ENCODE measurements at regions of chr17 and their contacts with region 1.

Region 1: GRCh38 chr17:6640536-6641373 is at the starts of genes KIAA0753 and TXNDC17:
- DNase-seq: peak; percentile 95
- ATAC-seq: peak; percentile 95
- H3K4me3 ChIP-seq: peak within 1 kb of the TSS; percentile 83 to 94 (median 89)
- H3K4me3 Mint-ChIP-seq: peak within 1 kb of the TSS; percentile 98
- H3K27ac ChIP-seq: peak within 1 kb of the TSS; percentile 64 to 89
- H3K27ac Mint-ChIP-seq: peak within 1 kb of the TSS; percentile 99
- H3K4me1 ChIP-seq: peaks cover 22 to 30% of the 10 kb centered on the region in 2 donors
- H3K4me1 Mint-ChIP-seq: peaks cover 37% of the 10 kb centered on the region
- H3K27me3 ChIP-seq: no peaks in the 10 kb centered on the region
- H3K27me3 Mint-ChIP-seq: no peaks in the 10 kb centered on the region
- CTCF ChIP-seq: no peak
- total RNA-seq, gene KIAA0753: 28.7 and 29.1 TPM in 2 replicates
- total RNA-seq, gene TXNDC17: 18.2 and 19.5 TPM in 2 replicates

Region 2: GRCh38 chr17:6443692-6444569 is 196.8 kb before region 1 on chr17 and contains the start of gene PIMREG:
- CTCF ChIA-PET with region 1: no interaction called
- POLR2A ChIA-PET with region 1: interaction called, 7 read pairs
- intact Hi-C with region 1: loop called (anchors 1 kb)
- DNase-seq: peak; percentile 97
- ATAC-seq: peak; percentile 96
- H3K4me3 ChIP-seq: peak within 1 kb of the TSS; percentile 55 to 74 (median 69)
- H3K4me3 Mint-ChIP-seq: peak within 1 kb of the TSS; percentile 84
- H3K27ac ChIP-seq: peak within 1 kb of the TSS in 1 of 2 donors; percentile 58
- H3K27ac Mint-ChIP-seq: peak within 1 kb of the TSS; percentile 80
- H3K4me1 ChIP-seq: peaks cover 5 to 14% of the 10 kb centered on the region in 2 donors
- H3K4me1 Mint-ChIP-seq: peaks cover 12% of the 10 kb centered on the region
- H3K27me3 ChIP-seq: peaks cover 0 to 10% (median 4%) of the 10 kb centered on the region in 4 experiments
- H3K27me3 Mint-ChIP-seq: peaks cover 20% of the 10 kb centered on the region
- CTCF ChIP-seq: no peak
- total RNA-seq, gene PIMREG: not detected in 2 replicates

Region 3: GRCh38 chr17:6660805-6661463 is 20.2 kb after region 1 on chr17:
- CTCF ChIA-PET with region 1: interaction called, 3 read pairs
- POLR2A ChIA-PET with region 1: interaction called, 3 read pairs
- intact Hi-C with region 1: loop called (anchors 2 kb)
- DNase-seq: peak; percentile 78
- ATAC-seq: peak; percentile 70
- H3K4me3 ChIP-seq: peak overlapping the region in 4 of 5 experiments; percentile 18 to 54 (median 40)
- H3K4me3 Mint-ChIP-seq: peak overlapping the region; percentile 73
- H3K27ac ChIP-seq: peak overlapping the region; percentile 31 to 76
- H3K27ac Mint-ChIP-seq: peak overlapping the region; percentile 84
- H3K4me1 ChIP-seq: peaks cover 41 to 61% of the 10 kb centered on the region in 2 donors
- H3K4me1 Mint-ChIP-seq: peaks cover 58% of the 10 kb centered on the region
- H3K27me3 ChIP-seq: no peaks in the 10 kb centered on the region
- H3K27me3 Mint-ChIP-seq: no peaks in the 10 kb centered on the region
- CTCF ChIP-seq: no peak